B cell (primary cell): ENCODE measurements at regions of chr4 and their contacts with region 1.

Region 1: DNA sequence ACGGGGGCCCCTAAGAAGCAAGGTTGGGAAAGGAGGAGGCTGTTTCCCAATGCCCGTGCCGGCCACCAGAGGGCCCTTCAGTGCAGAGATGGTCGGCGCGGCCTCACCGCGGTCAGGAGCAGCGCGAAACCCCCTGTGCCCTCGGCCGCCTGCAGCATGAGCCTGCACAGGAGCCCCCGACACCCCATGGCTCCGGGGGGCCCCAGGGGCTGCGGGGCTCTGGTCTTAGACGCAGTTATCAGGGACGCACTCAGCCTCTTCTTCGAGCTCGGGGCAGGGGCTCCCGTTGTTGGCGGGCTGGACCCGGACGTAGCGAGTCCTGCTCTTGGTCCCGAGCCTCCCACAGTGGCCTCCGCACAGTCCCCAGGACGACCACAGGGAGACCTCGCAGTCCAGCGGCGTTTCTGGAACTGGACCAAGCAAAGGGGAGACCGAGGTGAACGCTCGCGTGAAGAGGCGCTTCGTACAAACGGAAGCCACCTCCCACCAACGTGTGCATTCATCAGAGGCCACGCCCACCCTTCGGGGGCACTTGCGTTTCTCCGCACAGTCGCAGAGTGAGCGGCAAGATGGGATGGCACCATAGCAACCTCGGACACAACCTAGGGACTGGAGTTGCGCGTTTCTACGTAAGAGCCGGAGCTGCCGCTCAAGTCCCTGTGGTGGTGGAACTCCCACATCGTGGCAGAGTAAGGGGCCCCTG is 5.0 kb downstream of the SPON2 start:
- DNase-seq: peak; percentile 94
- ATAC-seq: peak; percentile 84
- H3K4me3 ChIP-seq: peak overlapping the region; percentile 67 to 97 (median 92)
- H3K4me3 Mint-ChIP-seq: peak overlapping the region; percentile 86
- H3K27ac ChIP-seq: peak overlapping the region; percentile 73 to 79
- H3K27ac Mint-ChIP-seq: peak overlapping the region; percentile 79
- H3K4me1 ChIP-seq: peaks cover 50 to 64% of the 10 kb centered on the region in 2 donors
- H3K4me1 Mint-ChIP-seq: peaks cover 54% of the 10 kb centered on the region
- H3K27me3 ChIP-seq: peaks cover 0 to 20% (median 9%) of the 10 kb centered on the region in 4 experiments
- H3K27me3 Mint-ChIP-seq: peaks cover 3% of the 10 kb centered on the region
- CTCF ChIP-seq: peak; percentile 96

Region 2: DNA sequence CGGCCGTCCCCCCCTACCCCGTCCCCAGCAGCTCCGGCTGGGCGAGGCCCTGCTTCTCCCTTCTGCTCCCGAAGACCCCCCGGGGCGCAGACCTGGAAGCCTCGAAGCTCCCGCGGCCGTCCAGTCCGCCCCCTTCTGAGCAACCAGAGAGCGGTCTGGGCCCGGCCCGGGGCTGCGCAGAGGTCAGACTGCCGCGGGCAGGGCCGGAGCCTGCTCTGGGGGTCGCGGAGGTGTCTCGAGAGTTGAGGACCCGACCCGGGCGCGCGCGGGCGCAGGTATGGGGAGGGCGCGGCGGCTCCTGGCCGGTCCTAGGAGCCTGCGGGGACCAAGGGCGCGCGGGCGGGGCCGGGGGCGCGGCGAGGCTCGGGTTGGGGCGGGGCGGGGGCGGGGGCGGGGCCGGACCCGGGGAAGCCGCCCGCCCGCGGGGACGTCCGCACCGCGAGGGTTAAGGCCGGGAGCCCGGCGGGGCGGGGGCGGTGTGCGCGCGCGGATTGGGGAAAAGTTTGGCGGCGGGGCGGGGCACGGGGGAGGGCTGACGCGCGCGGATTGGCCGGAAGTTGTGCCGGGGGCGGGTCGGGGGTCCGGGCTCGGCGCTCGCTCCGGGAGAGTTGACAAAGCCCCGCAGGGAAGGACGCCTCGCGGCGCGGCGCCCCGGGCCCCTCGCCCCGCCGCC is 156.2 kb before region 1 on chr4 and contains the start of gene FGFRL1:
- CTCF ChIA-PET with region 1: no interaction called
- POLR2A ChIA-PET with region 1: no interaction called
- intact Hi-C with region 1: loop called (anchors 1 kb)
- DNase-seq: peak; percentile 92
- ATAC-seq: peak; percentile 63
- H3K4me3 ChIP-seq: peak within 1 kb of the TSS in 4 of 5 experiments; percentile 60 to 74 (median 66)
- H3K4me3 Mint-ChIP-seq: peak within 1 kb of the TSS; percentile 91
- H3K27ac ChIP-seq: peak within 1 kb of the TSS; percentile 36 to 38
- H3K27ac Mint-ChIP-seq: peak within 1 kb of the TSS; percentile 89
- H3K4me1 ChIP-seq: peaks cover 24 to 30% of the 10 kb centered on the region in 2 donors
- H3K4me1 Mint-ChIP-seq: peaks cover 20% of the 10 kb centered on the region
- H3K27me3 ChIP-seq: peaks cover 0 to 24% (median 12%) of the 10 kb centered on the region in 4 experiments
- H3K27me3 Mint-ChIP-seq: peaks cover 29% of the 10 kb centered on the region
- CTCF ChIP-seq: no peak
- total RNA-seq, gene FGFRL1: 28.5 and 28.9 TPM in 2 replicates

Region 3: GRCh38 chr4:1026115-1026514 is 141.3 kb before region 1 on chr4:
- CTCF ChIA-PET with region 1: no interaction called
- POLR2A ChIA-PET with region 1: no interaction called
- intact Hi-C with region 1: no loop called
- DNase-seq: peak; percentile 84
- ATAC-seq: peak; percentile 78
- H3K4me3 ChIP-seq: no peak overlapping the region
- H3K4me3 Mint-ChIP-seq: peak overlapping the region; percentile 64
- H3K27ac ChIP-seq: peak overlapping the region in 1 of 2 donors; percentile 18
- H3K27ac Mint-ChIP-seq: peak overlapping the region; percentile 86
- H3K4me1 ChIP-seq: peaks cover 23 to 36% of the 10 kb centered on the region in 2 donors
- H3K4me1 Mint-ChIP-seq: peaks cover 30% of the 10 kb centered on the region
- H3K27me3 ChIP-seq: peaks cover 0 to 14% (median 0%) of the 10 kb centered on the region in 4 experiments
- H3K27me3 Mint-ChIP-seq: no peaks in the 10 kb centered on the region
- CTCF ChIP-seq: no peak

Region 4: GRCh38 chr4:1183985-1184773 is 16.8 kb after region 1 on chr4:
- CTCF ChIA-PET with region 1: interaction called, 10 read pairs
- POLR2A ChIA-PET with region 1: interaction called, 4 read pairs
- intact Hi-C with region 1: no loop called
- DNase-seq: peak; percentile 72
- ATAC-seq: peak; percentile 59
- H3K4me3 ChIP-seq: peak overlapping the region in 4 of 5 experiments; percentile 8 to 41 (median 34)
- H3K4me3 Mint-ChIP-seq: peak overlapping the region; percentile 82
- H3K27ac ChIP-seq: peak overlapping the region; percentile 51 to 61
- H3K27ac Mint-ChIP-seq: peak overlapping the region; percentile 91
- H3K4me1 ChIP-seq: peaks cover 23 to 29% of the 10 kb centered on the region in 2 donors
- H3K4me1 Mint-ChIP-seq: peaks cover 31% of the 10 kb centered on the region
- H3K27me3 ChIP-seq: no peaks in the 10 kb centered on the region
- H3K27me3 Mint-ChIP-seq: no peaks in the 10 kb centered on the region
- CTCF ChIP-seq: no peak

Region 5: DNA sequence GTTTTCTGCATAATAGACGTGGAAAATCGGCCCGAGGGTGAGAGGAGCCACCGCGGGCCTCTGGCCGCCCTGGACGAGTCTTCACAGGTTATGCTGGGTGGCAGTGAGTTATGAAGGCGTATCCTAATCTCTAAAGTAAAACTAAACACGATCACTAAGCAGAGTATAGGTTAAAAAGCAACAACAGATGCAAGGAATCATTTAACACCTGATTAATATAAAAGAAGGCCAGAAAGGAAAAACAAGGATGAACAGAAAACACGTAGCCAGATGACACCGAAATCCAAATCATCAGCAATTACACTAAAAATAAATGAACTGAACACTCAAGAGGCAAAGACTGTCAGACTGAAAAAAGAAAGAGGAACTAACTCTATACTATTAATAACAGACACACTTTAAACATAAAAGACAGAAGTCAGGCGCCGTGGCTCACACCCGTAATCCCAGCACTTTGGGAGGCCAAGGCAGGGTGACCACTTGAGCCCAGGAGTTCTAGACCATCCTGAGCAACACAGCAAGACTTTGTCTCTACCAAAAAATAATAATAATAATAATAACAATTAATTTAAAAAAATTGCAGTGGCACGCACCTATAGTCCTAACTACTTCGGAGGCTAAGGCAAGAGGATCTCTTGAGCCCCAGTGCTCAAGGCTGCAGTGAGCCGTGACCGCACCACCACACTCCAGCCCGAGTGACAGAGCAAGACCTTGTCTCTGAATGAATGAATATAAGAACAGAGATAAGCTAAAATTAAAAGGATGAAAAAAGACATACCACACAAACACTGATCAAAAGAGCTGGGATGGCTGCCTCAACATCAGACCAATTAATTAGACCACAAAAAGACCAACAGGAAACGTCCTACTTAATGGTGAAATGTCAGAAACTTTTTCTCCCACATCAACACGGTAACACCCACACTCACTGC is 51.5 kb after region 1 on chr4:
- CTCF ChIA-PET with region 1: interaction called, 12 read pairs
- POLR2A ChIA-PET with region 1: no interaction called
- intact Hi-C with region 1: loop called (anchors 1 kb)
- DNase-seq: peak; percentile 68
- ATAC-seq: peak; percentile 83
- H3K4me3 ChIP-seq: peak overlapping the region in 4 of 5 experiments; percentile 23 to 60 (median 34)
- H3K4me3 Mint-ChIP-seq: peak overlapping the region; percentile 84
- H3K27ac ChIP-seq: peak overlapping the region; percentile 56 to 60
- H3K27ac Mint-ChIP-seq: peak overlapping the region; percentile 92
- H3K4me1 ChIP-seq: peaks cover 44 to 69% of the 10 kb centered on the region in 2 donors
- H3K4me1 Mint-ChIP-seq: peaks cover 62% of the 10 kb centered on the region
- H3K27me3 ChIP-seq: no peaks in the 10 kb centered on the region
- H3K27me3 Mint-ChIP-seq: no peaks in the 10 kb centered on the region
- CTCF ChIP-seq: no peak

Region 6: DNA sequence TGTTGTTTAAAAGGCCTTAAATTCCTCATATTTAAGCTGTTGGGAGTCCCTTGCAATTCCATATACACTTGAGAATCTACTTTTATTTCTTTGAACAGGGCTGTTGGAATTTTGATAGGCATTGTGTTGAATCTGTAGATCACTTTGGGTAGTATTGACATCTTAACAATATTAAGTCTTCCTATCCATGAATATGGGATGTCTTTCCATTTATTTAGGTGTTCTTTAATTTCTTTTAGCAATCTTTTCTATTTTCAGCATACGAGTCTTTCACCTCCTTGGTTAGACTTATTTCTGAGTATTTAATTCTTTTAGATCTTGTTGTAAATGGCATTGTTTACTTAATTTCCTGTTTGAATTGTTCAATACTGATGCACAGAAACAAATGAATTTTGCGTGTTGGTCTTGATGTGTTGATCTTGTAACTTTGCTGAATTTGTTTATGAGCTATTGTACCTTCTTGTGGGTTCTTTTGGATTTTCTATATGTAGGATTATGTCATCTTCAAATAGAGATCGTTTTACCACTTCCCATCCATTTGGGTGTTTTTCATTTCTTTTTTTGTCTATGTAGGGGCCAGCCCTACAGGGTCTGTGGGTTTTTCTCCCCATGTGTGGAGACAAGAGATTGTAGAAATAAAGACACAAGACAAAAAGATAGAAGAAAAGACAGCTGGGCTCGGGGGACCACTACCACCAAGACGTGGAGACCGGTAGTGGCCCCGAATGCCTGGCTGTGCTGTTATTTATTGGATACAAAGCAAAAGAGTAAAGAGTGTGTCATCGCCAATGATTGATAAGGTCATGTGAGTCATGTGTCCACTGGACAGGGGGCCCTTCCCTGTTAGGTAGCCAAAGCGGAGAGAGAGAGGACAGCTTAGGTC is 99.7 kb after region 1 on chr4:
- CTCF ChIA-PET with region 1: interaction called, 33 read pairs
- POLR2A ChIA-PET with region 1: interaction called, 5 read pairs
- intact Hi-C with region 1: loop called (anchors 1 kb)
- DNase-seq: no peak
- ATAC-seq: peak; percentile 53
- H3K4me3 ChIP-seq: peak overlapping the region in 4 of 5 experiments; percentile 28 to 52 (median 42)
- H3K4me3 Mint-ChIP-seq: peak overlapping the region; percentile 92
- H3K27ac ChIP-seq: peak overlapping the region; percentile 76 to 82
- H3K27ac Mint-ChIP-seq: peak overlapping the region; percentile 95
- H3K4me1 ChIP-seq: peaks cover 16 to 17% of the 10 kb centered on the region in 2 donors
- H3K4me1 Mint-ChIP-seq: peaks cover 32% of the 10 kb centered on the region
- H3K27me3 ChIP-seq: no peaks in the 10 kb centered on the region
- H3K27me3 Mint-ChIP-seq: no peaks in the 10 kb centered on the region
- CTCF ChIP-seq: no peak

Region 7: GRCh38 chr4:1346781-1347409 is 179.5 kb after region 1 on chr4 and contains the start of gene UVSSA:
- CTCF ChIA-PET with region 1: interaction called, 4 read pairs
- POLR2A ChIA-PET with region 1: interaction called, 4 read pairs
- intact Hi-C with region 1: loop called (anchors 1 kb)
- DNase-seq: peak; percentile 100
- ATAC-seq: peak; percentile 90
- H3K4me3 ChIP-seq: peak within 1 kb of the TSS; percentile 23 to 86 (median 82)
- H3K4me3 Mint-ChIP-seq: peak within 1 kb of the TSS; percentile 93
- H3K27ac ChIP-seq: peak within 1 kb of the TSS; percentile 91
- H3K27ac Mint-ChIP-seq: peak within 1 kb of the TSS; percentile 96
- H3K4me1 ChIP-seq: peaks cover 15 to 26% of the 10 kb centered on the region in 2 donors
- H3K4me1 Mint-ChIP-seq: peaks cover 33% of the 10 kb centered on the region
- H3K27me3 ChIP-seq: no peaks in the 10 kb centered on the region
- H3K27me3 Mint-ChIP-seq: no peaks in the 10 kb centered on the region
- CTCF ChIP-seq: no peak
- total RNA-seq, gene UVSSA: 40.5 and 47.3 TPM in 2 replicates

Region 8: GRCh38 chr4:1490654-1491327 is 323.4 kb after region 1 on chr4:
- CTCF ChIA-PET with region 1: no interaction called
- POLR2A ChIA-PET with region 1: no interaction called
- intact Hi-C with region 1: no loop called
- DNase-seq: no peak
- ATAC-seq: no peak
- H3K4me3 ChIP-seq: no peak overlapping the region
- H3K4me3 Mint-ChIP-seq: no peak overlapping the region
- H3K27ac ChIP-seq: no peak overlapping the region
- H3K27ac Mint-ChIP-seq: no peak overlapping the region
- H3K4me1 ChIP-seq: no peaks in the 10 kb centered on the region
- H3K4me1 Mint-ChIP-seq: no peaks in the 10 kb centered on the region
- H3K27me3 ChIP-seq: peaks cover 0 to 3% (median 0%) of the 10 kb centered on the region in 4 experiments
- H3K27me3 Mint-ChIP-seq: peaks cover 9% of the 10 kb centered on the region
- CTCF ChIP-seq: no peak